ENCODE measurements at regions of chr4 and their contacts with region 1.

Region 1: GRCh38 chr4:24169956-24170355 is 280.1 kb upstream of the PPARGC1A start:
- DNase-seq: no peak
- H3K4me3 ChIP-seq: no peak overlapping the region
- H3K27ac ChIP-seq: no peak overlapping the region
- H3K4me1 ChIP-seq: no peaks in the 10 kb centered on the region
- H3K27me3 ChIP-seq: no peaks in the 10 kb centered on the region
- CTCF ChIP-seq: no peak

Region 2: DNA sequence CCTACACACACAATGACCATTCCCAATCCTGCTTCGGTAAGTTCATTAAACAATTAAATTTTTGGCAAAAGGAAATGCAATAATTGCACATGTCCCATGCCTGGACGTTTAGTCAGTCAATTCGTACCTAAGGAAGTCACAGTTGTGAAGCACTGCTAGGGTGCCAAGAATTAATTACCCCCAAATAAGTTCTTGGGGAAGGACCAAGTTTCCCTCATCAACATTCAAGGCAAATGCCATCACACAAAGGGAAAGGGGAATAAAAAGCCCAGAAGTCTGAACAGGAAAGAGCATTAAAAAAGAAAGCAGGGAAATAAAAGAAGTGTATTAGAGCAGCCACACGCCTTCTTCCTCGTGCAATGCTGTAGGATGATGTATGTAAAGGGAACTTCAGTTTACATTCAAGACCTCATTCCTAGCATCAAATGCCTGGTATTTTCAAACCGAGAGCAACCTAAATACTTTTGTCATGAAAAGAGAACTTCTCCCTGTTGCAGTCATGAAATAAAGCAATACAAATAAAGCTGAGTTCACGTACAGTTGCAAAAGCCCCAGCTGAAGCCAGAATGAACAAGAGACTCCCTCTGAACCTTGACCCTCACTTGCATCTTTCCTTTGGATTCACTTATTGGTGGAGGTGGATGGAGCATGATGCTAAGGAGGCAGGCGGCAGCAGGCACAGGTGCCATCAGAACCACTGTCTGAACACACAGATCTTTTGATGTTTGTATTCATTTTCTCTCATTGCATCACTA is 156.1 kb before region 1 on chr4:
- intact Hi-C with region 1: no loop called
- DNase-seq: no peak
- H3K4me3 ChIP-seq: no peak overlapping the region
- H3K27ac ChIP-seq: no peak overlapping the region
- H3K4me1 ChIP-seq: peaks cover 0 to 11% (median 3%) of the 10 kb centered on the region in 4 donors
- H3K27me3 ChIP-seq: no peaks in the 10 kb centered on the region
- CTCF ChIP-seq: no peak

Region 3: DNA sequence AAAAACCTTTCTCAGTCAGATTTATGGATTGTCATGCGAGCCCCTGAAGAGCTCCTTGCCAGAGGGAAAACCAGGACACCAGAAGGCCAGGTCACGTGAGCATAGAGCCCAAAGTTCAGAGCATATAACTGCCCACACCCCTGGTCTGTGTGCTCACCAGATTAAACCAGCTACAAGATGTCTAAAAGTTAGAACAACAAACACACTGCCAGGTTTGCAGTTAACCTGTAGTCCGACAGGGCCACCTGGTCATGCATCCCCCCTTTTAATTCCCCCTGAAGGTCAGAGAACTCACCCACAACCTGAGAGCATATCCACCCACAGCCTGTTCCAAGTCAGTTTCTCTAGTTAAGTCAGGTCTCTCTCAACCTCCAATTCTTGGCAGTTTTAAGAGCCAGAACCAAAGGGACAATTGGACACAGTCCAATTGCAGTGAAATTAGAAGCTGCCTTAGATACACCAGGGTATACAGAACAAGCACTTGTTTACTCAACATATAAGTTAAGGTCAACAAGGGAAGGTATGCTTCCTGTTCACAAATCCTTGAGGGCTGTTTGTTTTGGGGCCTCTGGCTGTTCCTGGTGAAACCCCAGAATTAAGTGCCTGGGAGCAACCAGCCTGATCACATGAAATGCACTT is 31.9 kb before region 1 on chr4:
- intact Hi-C with region 1: loop called (anchors 1 kb)
- DNase-seq: no peak
- H3K4me3 ChIP-seq: no peak overlapping the region
- H3K27ac ChIP-seq: no peak overlapping the region
- H3K4me1 ChIP-seq: peaks cover 0 to 15% (median 9%) of the 10 kb centered on the region in 4 donors
- H3K27me3 ChIP-seq: no peaks in the 10 kb centered on the region
- CTCF ChIP-seq: no peak

Region 4: GRCh38 chr4:24321151-24321550 is 151.2 kb after region 1 on chr4:
- intact Hi-C with region 1: no loop called
- DNase-seq: no peak
- H3K4me3 ChIP-seq: no peak overlapping the region
- H3K27ac ChIP-seq: no peak overlapping the region
- H3K4me1 ChIP-seq: no peaks in the 10 kb centered on the region
- H3K27me3 ChIP-seq: no peaks in the 10 kb centered on the region
- CTCF ChIP-seq: no peak

Region 5: DNA sequence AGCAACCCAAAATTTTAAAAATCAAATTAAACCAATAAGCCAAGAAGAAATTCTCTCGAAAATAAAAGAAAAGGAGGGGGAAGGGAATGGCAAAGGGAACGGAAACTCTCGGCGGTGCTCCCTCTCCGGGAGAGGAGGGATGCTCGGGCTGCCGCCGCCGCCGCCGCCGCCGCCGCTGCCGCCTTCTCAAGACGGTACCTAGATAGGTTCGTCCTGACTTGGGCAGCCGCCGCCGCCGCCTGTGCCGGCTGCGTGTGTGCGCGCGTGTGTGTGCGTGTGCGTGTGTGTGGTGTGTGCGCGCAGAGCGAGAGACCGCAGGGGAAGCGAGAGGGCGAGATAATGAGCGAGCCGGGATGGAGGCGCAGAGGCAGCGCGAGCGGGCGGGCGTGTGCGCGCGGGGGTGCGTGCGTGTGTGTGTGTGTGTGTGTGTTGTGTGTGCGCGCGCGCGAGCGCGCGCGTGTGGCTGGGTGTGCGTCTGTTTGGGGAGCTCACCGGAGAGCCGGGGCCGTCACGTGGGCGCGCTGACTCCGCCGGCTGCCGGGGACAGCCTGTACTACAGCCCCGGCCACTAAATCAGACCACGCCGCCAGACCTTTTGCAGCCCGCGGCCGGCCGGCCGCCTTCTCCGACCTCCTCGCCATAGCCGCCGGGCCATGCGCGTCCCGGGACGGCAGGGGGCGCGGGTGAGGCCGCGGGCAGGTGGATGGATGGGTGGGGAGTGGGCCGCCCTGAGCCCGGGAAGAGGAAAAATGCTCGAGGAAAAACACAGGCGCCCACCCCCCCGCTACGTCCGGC is 302.8 kb after region 1 on chr4:
- intact Hi-C with region 1: no loop called
- DNase-seq: peak; percentile 82 to 86
- H3K4me3 ChIP-seq: peak overlapping the region; percentile 54 to 66
- H3K27ac ChIP-seq: peak overlapping the region; percentile 41 to 46
- H3K4me1 ChIP-seq: peaks cover 0 to 38% (median 30%) of the 10 kb centered on the region in 4 donors
- H3K27me3 ChIP-seq: peaks cover 0 to 13% of the 10 kb centered on the region in 2 donors
- CTCF ChIP-seq: peak; percentile 60 to 65